Prostate gland (tissue), 2 donors: ENCODE measurements at regions of chr10 and their contacts with region 1.

Region 1: DNA sequence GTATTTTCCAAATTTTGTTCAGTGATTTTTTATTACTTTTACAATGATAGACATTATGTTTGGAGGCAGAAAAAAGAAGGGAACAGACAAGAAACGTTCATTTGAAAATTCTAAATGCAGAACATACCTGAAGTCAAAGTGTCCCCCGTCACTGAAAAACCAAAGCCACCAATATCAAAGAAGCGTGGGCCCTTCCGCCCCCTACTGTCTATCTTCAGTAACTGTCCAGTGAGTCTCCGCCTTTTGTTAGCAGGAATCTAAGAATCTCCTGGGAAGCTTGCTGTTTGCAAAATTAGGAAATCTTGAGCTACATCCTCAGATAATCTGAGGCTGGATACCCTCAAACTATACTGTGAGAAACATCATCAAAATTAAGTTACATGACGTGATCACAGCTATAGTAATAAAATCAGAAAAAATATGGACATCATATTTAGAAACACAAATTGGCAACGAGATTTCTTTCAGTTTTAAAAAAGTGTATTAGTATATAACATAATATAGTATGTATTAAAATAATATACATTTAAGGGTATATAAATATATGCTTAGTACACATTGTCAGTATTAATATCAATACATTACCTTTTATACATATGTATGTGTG is 169.3 kb upstream of the AKR1E2 start:
- DNase-seq: peak; percentile 52
- H3K4me3 ChIP-seq: no peak overlapping the region
- H3K27ac ChIP-seq: no peak overlapping the region
- H3K4me1 ChIP-seq: peaks cover 6% of the 10 kb centered on the region
- H3K27me3 ChIP-seq: no peaks in the 10 kb centered on the region
- CTCF ChIP-seq: peak; percentile 68 to 88 (median 80)
- POLR2A ChIP-seq: no peak

Region 2: GRCh38 chr10:3197348-3198003 is 1459.2 kb before region 1 on chr10:
- intact Hi-C with region 1: loop called (anchors 10 kb)
- DNase-seq: peak; percentile 74
- H3K4me3 ChIP-seq: no peak overlapping the region
- H3K27ac ChIP-seq: no peak overlapping the region
- H3K4me1 ChIP-seq: no peaks in the 10 kb centered on the region
- H3K27me3 ChIP-seq: no peaks in the 10 kb centered on the region
- CTCF ChIP-seq: peak; percentile 66 to 92 (median 82)
- POLR2A ChIP-seq: no peak

Region 3: GRCh38 chr10:3239066-3239919 is 1417.4 kb before region 1 on chr10:
- intact Hi-C with region 1: loop called (anchors 5 kb)
- DNase-seq: peak; percentile 61
- H3K4me3 ChIP-seq: no peak overlapping the region
- H3K27ac ChIP-seq: no peak overlapping the region
- H3K4me1 ChIP-seq: no peaks in the 10 kb centered on the region
- H3K27me3 ChIP-seq: no peaks in the 10 kb centered on the region
- CTCF ChIP-seq: peak; percentile 72 to 86 (median 84)
- POLR2A ChIP-seq: no peak

Region 4: GRCh38 chr10:4067531-4067930 is 589.1 kb before region 1 on chr10:
- intact Hi-C with region 1: loop called (anchors 10 kb)
- DNase-seq: no peak
- H3K4me3 ChIP-seq: no peak overlapping the region
- H3K27ac ChIP-seq: no peak overlapping the region
- H3K4me1 ChIP-seq: no peaks in the 10 kb centered on the region
- H3K27me3 ChIP-seq: no peaks in the 10 kb centered on the region
- CTCF ChIP-seq: no peak
- POLR2A ChIP-seq: no peak

Region 5: GRCh38 chr10:4195213-4195612 is 461.5 kb before region 1 on chr10:
- intact Hi-C with region 1: loop called (anchors 10 kb)
- DNase-seq: no peak
- H3K4me3 ChIP-seq: no peak overlapping the region
- H3K27ac ChIP-seq: no peak overlapping the region
- H3K4me1 ChIP-seq: no peaks in the 10 kb centered on the region
- H3K27me3 ChIP-seq: no peaks in the 10 kb centered on the region
- CTCF ChIP-seq: no peak
- POLR2A ChIP-seq: no peak

Region 6: GRCh38 chr10:4512671-4513240 is 143.9 kb before region 1 on chr10:
- intact Hi-C with region 1: loop called (anchors 10 kb)
- DNase-seq: peak; percentile 49
- H3K4me3 ChIP-seq: no peak overlapping the region
- H3K27ac ChIP-seq: no peak overlapping the region
- H3K4me1 ChIP-seq: no peaks in the 10 kb centered on the region
- H3K27me3 ChIP-seq: no peaks in the 10 kb centered on the region
- CTCF ChIP-seq: peak in 3 of 4 experiments; percentile 38 to 55 (median 50)
- POLR2A ChIP-seq: no peak